ENCODE measurements at regions of chr5 and their contacts with region 1.

Region 1: GRCh38 chr5:135466178-135467050 is 14.3 kb upstream of the TIFAB start:
- DNase-seq: peak; percentile 61 to 87
- ATAC-seq: peak; percentile 87 to 95
- H3K4me3 ChIP-seq: no peak overlapping the region
- H3K27ac ChIP-seq: peak overlapping the region in 1 of 2 experiments; percentile 56; a peak in 2 of 6 replicates
- H3K4me1 ChIP-seq: no peaks in the 10 kb centered on the region
- CTCF ChIP-seq: peak; percentile 85
- EP300 ChIP-seq: no peak
- POLR2A ChIP-seq: no peak
- RAD21 ChIP-seq: peak; percentile 93 to 98

Region 2: DNA sequence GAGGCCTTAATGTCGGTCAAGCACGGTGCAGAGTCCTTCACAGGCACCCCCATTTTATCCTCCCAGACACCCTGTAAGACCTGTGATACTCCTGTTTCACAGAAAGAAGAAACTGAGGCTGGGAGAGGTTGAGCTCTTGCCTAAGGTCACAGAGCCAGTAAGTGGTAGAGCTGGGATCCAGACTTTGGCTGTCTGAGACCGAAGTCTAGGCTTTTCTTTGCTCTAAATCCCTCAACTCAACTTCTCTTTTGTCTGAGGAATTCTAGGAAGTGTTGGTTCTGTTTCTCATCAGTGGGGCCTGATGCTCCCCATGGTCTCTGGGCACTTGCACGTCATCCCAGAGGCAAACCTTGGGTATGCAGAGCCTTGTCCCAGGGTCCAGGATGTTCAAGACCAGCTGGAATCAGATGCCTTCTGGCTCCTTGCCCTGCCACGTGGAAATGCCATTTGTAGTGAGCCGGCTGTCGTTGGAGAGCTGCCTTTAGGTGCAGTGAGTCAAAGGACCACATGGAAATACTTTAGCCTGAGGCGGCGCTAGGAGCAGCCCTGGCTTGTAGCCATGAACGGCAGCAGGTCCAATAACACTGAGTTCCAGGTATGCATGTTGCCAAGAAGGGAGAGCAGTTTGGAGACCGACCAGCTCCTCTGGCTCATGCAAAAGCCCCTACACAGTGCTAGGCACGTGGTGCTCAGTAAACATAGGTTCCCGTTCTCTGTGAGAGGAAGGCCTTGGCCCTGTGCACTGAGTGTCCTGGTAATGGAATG is 28.4 kb before region 1 on chr5:
- CTCF ChIA-PET with region 1: interaction called, 17 read pairs
- POLR2A ChIA-PET with region 1: no interaction called
- DNase-seq: no peak
- ATAC-seq: no peak; a peak in 1 of 6 replicates
- H3K4me3 ChIP-seq: no peak overlapping the region
- H3K27ac ChIP-seq: no peak overlapping the region
- H3K4me1 ChIP-seq: no peaks in the 10 kb centered on the region
- CTCF ChIP-seq: no peak
- EP300 ChIP-seq: no peak
- POLR2A ChIP-seq: no peak
- RAD21 ChIP-seq: no peak

Region 3: DNA sequence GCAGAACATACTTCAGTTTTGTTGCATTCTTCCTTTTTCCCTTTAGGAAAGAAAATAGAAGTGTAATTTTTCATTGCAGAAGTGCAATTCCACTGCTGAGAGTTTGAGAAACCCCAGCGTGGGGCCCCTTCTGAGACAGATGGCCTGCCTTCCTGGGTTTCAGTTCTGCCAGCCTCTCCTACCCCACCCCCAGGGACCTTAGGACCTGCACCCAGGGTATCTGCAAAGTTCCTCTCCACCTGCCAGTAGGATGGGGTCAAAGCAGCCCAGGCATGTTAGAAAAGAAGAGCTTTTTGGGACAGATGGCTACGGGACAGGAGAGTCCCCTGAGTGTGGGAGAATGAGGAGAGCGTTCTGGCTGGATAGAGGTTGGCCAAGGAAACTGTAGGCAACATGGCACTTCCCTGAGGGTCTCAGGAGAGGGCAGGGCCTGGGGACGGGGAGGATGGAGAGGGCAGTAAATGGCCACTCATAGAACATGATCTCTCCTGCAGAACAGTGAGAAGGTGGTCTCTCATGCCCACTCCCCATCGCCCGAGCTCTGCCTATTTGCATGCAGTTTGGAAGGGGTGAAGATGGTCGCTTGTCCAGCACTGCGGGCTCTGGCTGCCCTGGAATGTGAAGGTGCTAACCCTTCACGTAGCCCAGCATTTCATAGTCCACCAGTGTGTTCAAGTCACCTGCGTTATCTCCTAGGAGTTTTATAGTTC is 13.9 kb before region 1 on chr5 and contains the start of gene TIFAB:
- CTCF ChIA-PET with region 1: interaction called, 80 read pairs
- POLR2A ChIA-PET with region 1: no interaction called
- DNase-seq: no peak
- ATAC-seq: no peak
- H3K4me3 ChIP-seq: no peak within 1 kb of the TSS
- H3K27ac ChIP-seq: no peak within 1 kb of the TSS
- H3K4me1 ChIP-seq: no peaks in the 10 kb centered on the region
- CTCF ChIP-seq: no peak
- EP300 ChIP-seq: no peak
- POLR2A ChIP-seq: no peak
- RAD21 ChIP-seq: no peak
- polyA plus RNA-seq, gene TIFAB: not detected in 2 replicates

Region 4: DNA sequence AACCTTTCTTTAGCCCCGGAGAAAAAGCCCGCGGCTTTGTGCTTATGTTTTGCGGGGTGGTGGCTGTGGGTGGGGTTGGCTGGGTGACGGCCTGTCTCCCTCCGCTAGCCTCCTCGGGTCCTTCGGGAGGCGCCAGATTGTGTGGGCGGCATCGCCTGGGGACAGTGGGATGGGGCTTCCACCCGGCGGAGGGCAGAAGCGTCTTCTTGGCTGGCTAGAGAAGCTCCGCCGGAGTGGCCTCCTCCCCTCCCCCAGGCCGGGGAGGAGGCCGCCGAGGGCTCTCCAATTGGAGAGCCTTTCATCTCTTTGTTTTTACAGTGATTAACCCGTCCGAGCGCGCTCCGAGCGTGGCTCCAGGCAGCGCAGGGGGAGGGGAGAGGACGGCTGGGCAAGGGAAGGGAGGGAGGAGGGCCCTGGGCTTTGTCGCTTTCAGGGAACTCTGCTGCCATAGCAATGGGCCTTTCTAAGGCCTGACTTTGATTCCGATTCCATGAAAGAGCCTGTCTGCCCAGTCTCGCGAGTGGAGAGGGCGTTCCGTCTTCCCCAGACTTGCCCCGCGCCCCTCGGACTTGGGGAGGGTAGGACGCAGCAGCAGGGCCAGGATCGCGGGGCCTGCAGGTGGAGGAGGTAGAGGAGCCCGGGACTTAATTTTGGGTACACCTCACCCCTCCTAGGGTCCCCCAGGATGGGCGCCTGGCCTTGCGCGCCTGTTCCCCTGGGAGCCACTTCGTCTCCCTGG is 22.5 kb after region 1 on chr5:
- CTCF ChIA-PET with region 1: interaction called, 43 read pairs
- POLR2A ChIA-PET with region 1: no interaction called
- DNase-seq: peak; percentile 53 to 68
- ATAC-seq: peak; percentile 75 to 85
- H3K4me3 ChIP-seq: peak overlapping the region; percentile 38
- H3K27ac ChIP-seq: peak overlapping the region; percentile 37 to 83
- H3K4me1 ChIP-seq: peaks cover 27% of the 10 kb centered on the region
- CTCF ChIP-seq: no peak
- EP300 ChIP-seq: no peak
- POLR2A ChIP-seq: no peak
- RAD21 ChIP-seq: no peak

Region 5: GRCh38 chr5:135526924-135527323 is 60.5 kb after region 1 on chr5:
- CTCF ChIA-PET with region 1: interaction called, 16 read pairs
- POLR2A ChIA-PET with region 1: no interaction called
- DNase-seq: no peak
- ATAC-seq: no peak
- H3K4me3 ChIP-seq: no peak overlapping the region
- H3K27ac ChIP-seq: no peak overlapping the region
- H3K4me1 ChIP-seq: no peaks in the 10 kb centered on the region
- CTCF ChIP-seq: no peak
- EP300 ChIP-seq: no peak
- POLR2A ChIP-seq: no peak
- RAD21 ChIP-seq: no peak

Region 6: DNA sequence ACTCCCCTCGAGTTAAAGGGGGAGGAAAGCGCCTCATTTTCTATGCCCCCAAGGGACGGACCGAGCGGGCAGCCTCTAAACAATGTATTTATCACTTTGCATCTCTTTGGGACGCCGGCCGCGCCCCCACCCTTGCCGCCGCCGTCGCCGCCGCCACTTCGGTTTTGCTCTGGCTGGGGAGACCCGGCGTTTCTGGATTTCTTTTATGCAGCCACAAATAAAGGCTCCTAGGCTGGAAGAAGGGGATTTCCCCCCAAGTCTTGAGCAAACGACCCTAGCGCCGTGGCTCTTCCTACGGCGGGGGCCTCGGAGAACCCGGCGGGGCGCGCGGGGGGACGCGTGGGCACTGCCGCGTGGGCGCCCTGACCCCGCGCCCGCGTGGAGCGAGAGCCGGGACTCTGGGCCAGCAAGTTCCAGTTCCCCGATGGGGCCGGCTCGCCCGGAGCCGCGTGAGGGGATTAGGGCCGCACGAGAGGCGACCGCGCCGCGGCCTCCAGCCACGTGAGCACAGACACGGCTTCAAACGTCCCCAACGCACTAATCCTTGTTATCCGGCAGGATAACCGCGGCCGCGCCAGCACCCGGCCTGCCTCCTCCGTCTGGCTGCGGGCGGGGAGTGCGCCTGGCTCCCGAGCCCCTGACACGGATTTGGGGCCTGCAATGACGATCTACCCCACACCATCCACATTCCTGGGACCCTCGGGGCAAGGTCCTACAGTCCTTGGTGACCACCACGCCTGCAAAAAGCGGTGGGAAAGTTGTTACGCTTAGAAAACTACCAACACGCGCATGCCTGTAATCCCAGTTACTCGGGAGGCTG is 77.3 kb after region 1 on chr5:
- CTCF ChIA-PET with region 1: interaction called, 1,932 read pairs
- POLR2A ChIA-PET with region 1: no interaction called
- DNase-seq: no peak
- ATAC-seq: peak in 1 of 2 experiments; percentile 35; a peak in 3 of 6 replicates
- H3K4me3 ChIP-seq: peak overlapping the region; percentile 42
- H3K27ac ChIP-seq: peak overlapping the region in 1 of 2 experiments; percentile 74; a peak in 3 of 6 replicates
- H3K4me1 ChIP-seq: no peaks in the 10 kb centered on the region
- CTCF ChIP-seq: no peak
- EP300 ChIP-seq: no peak
- POLR2A ChIP-seq: no peak
- RAD21 ChIP-seq: no peak

Region 7: GRCh38 chr5:135739383-135739981 is 273.1 kb after region 1 on chr5:
- CTCF ChIA-PET with region 1: no interaction called
- POLR2A ChIA-PET with region 1: no interaction called
- DNase-seq: no peak
- ATAC-seq: no peak
- H3K4me3 ChIP-seq: no peak overlapping the region
- H3K27ac ChIP-seq: no peak overlapping the region
- H3K4me1 ChIP-seq: no peaks in the 10 kb centered on the region
- CTCF ChIP-seq: no peak
- EP300 ChIP-seq: no peak
- POLR2A ChIP-seq: no peak
- RAD21 ChIP-seq: no peak

Region 8: DNA sequence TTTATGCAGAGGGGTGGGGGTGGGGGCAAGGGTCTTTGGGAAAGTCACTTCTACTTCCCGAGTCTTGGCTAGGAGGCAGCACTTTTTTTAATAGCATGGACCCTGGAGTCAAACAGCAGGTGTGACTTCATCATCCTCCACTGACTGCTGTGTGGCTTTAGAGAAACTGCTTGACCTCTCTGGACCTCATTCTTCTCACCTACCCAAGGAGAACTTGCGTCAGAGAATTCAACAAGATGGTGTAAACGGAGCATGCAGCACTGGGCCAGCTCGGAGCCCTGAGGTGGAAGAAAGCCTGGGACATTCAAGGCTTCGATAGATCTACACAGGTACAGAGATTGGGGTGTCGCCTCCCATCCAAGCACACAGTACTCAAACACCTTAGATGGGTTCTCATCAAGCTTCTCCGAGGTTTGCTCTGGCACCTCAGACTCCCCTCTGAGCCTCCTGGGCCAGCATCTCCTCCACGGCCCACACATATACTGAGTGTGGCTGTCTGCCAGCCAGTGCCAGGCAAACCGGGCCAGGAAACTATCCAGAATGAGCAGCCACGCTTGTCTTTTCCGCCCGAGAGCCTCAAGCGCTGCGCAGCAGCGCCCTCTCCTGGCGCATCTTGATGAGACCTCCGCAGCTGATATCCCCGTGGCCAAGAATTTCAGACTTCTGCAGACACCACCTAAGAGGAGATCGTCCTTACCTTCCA is 363.4 kb after region 1 on chr5:
- CTCF ChIA-PET with region 1: interaction called, 105 read pairs
- POLR2A ChIA-PET with region 1: no interaction called
- DNase-seq: peak; percentile 56 to 79
- ATAC-seq: peak; percentile 28 to 64; a peak in 4 of 6 replicates
- H3K4me3 ChIP-seq: no peak overlapping the region
- H3K27ac ChIP-seq: no peak overlapping the region
- H3K4me1 ChIP-seq: 0 out of 3 replicates have a peak, but pooled peaks cover under 1% of the 10 kb centered on the region
- CTCF ChIP-seq: peak; percentile 86
- EP300 ChIP-seq: no peak
- POLR2A ChIP-seq: no peak
- RAD21 ChIP-seq: peak; percentile 83